CD14-positive monocyte (primary cell): ENCODE measurements at regions of chr2 and their contacts with region 1.

Region 1: DNA sequence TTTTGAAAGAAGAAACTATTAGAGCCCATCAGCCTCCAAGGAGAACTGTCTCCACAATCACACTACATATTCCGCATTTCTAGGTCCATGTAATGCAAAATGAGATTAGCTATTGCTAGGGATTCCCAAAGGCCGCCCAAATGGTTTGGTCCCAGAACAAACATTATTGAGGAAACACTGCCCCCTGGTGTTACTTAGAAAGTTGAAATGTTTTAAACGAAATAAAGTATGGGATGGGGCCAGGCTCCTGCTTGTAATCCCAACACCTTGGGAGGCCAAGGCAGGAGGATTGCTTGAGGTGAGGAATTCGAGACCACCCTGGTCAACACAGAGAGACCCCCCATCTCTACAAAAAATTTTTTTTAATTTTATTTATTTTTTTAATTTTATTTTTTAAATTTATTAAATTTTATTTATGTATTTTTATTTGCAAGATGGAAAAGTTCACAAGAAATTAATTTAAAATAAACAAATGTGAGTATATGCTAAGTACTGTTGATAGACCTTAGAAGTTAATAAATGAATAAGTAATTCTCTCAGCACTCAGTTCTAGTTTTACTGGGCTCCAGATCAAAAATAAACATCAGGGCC is 5.5 kb downstream of the NHEJ1 start:
- DNase-seq: peak; percentile 47 to 72 (median 64)
- H3K4me3 ChIP-seq: no peak overlapping the region
- H3K4me3 Mint-ChIP-seq: no peak overlapping the region
- H3K27ac ChIP-seq: no peak overlapping the region
- H3K27ac Mint-ChIP-seq: no peak overlapping the region
- H3K4me1 ChIP-seq: peaks cover 7% of the 10 kb centered on the region in 2 donors
- H3K4me1 Mint-ChIP-seq: peaks cover 7% of the 10 kb centered on the region
- H3K27me3 ChIP-seq: no peaks in the 10 kb centered on the region
- H3K27me3 Mint-ChIP-seq: peaks cover 0 to 3% (median 2%) of the 10 kb centered on the region in 3 donors
- CTCF ChIP-seq: peak; percentile 70

Region 2: DNA sequence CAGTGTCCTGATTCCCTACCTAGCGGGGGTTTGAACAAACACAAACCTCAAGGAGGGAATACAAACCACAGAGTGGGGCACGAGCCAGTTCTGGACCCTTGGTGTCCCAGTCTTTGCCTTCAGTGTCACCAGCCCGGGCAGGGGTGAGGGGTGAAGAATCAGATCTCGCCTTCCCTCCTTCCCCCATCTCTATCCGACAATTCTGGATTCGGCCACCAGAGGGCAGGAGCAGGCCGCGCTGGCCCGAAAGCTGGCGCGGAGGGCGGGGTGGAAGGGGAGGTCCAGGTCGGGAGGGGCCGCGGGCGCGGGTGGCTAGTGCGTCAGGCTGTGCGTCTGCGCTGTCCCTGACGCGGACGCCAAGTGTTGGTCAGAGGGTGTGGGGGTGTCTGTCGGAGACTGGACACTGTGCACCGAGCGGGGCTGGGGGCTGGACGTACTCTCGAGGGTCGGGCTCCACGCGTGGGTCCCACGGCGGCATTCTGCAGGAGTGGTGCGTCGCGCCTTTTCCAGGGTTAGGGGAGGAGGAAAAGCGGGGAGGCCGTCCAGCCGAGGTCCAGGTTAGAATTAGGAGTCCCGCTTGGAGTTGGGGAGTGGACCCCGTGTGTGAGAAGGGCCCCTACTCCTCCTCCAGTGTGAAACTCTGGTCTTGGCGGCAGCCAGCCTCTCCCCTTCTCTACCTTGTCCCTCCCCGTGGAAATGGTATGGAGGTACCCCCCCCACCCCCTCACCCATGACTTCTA is 159.0 kb before region 1 on chr2:
- intact Hi-C with region 1: loop called in 1 of 2 experiments (anchors 10 kb)
- DNase-seq: peak; percentile 59 to 86 (median 67)
- H3K4me3 ChIP-seq: no peak overlapping the region
- H3K4me3 Mint-ChIP-seq: peak overlapping the region in 1 of 2 donors; percentile 86
- H3K27ac ChIP-seq: no peak overlapping the region
- H3K27ac Mint-ChIP-seq: peak overlapping the region in 3 of 7 donors; percentile 30 to 84 (median 33)
- H3K4me1 ChIP-seq: peaks cover 3 to 13% of the 10 kb centered on the region in 2 donors
- H3K4me1 Mint-ChIP-seq: peaks cover 13% of the 10 kb centered on the region
- H3K27me3 ChIP-seq: peaks cover 63 to 98% of the 10 kb centered on the region in 2 donors
- H3K27me3 Mint-ChIP-seq: peaks cover 85 to 97% (median 95%) of the 10 kb centered on the region in 3 donors
- CTCF ChIP-seq: peak; percentile 83

Region 3: GRCh38 chr2:219029829-219030165 is 125.4 kb before region 1 on chr2:
- intact Hi-C with region 1: loop called in 1 of 2 experiments (anchors 2 kb)
- DNase-seq: peak; percentile 54 to 67 (median 61)
- H3K4me3 ChIP-seq: no peak overlapping the region
- H3K4me3 Mint-ChIP-seq: no peak overlapping the region
- H3K27ac ChIP-seq: no peak overlapping the region
- H3K27ac Mint-ChIP-seq: peak overlapping the region in 1 of 7 donors; percentile 23
- H3K4me1 ChIP-seq: no peaks in the 10 kb centered on the region
- H3K4me1 Mint-ChIP-seq: no peaks in the 10 kb centered on the region
- H3K27me3 ChIP-seq: peaks cover 0 to 16% of the 10 kb centered on the region in 2 donors
- H3K27me3 Mint-ChIP-seq: peaks cover 26 to 44% (median 30%) of the 10 kb centered on the region in 3 donors
- CTCF ChIP-seq: peak; percentile 98